Ovary (tissue), 10 donors: ENCODE measurements at regions of chr17 and their contacts with region 1.

Region 1: DNA sequence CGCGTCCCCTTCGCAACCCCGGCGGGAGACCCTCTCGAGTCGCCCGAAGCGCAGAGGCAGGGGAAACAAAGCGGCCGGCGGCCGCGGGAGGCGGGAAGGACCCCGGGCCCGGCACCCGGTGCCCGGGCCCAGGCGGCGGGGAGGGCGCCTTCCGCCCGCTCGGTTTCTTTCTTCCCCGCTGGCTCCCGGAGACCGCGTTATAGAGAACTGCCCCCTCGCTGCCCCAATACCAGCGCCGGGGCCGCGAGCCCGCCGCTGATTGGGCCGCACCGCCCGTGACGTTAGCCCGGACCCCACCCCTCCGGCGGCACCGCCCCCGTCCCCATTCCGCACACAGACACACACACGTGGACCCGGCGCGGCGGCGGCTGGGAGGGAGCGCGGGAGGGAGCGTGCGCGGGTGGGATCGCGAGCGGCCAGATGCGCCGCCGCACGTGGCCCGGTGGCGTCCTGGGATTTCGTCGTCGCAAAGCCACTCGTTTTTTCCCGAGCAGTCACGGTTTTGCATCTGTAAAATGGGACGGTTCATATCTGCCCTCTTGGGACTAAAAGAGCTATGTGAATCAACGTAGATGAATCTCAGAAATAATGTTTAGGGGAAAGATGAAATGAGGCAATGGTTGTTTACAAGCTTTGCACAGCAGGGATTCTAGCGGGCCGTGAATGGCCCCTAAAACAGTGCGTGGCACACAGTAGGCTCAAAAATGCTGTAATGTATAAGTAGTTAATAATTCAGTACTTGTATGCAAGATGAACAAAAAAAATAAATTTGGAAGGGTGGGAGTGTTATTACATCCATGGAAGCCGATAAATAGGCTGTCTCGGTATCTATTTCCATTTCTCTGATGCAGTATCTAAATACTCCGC is at the start of gene EPOP:
- DNase-seq: peak; percentile 64 to 84 (median 75)
- H3K4me3 ChIP-seq: peak within 1 kb of the TSS; percentile 25
- H3K27ac ChIP-seq: no peak within 1 kb of the TSS
- H3K4me1 ChIP-seq: no peaks in the 10 kb centered on the region
- H3K27me3 ChIP-seq: no peaks in the 10 kb centered on the region
- CTCF ChIP-seq: no peak
- EP300 ChIP-seq: no peak
- POLR2A ChIP-seq: no peak
- total RNA-seq, gene EPOP: 0.83 to 1.7 (median 0.86) TPM

Region 2: DNA sequence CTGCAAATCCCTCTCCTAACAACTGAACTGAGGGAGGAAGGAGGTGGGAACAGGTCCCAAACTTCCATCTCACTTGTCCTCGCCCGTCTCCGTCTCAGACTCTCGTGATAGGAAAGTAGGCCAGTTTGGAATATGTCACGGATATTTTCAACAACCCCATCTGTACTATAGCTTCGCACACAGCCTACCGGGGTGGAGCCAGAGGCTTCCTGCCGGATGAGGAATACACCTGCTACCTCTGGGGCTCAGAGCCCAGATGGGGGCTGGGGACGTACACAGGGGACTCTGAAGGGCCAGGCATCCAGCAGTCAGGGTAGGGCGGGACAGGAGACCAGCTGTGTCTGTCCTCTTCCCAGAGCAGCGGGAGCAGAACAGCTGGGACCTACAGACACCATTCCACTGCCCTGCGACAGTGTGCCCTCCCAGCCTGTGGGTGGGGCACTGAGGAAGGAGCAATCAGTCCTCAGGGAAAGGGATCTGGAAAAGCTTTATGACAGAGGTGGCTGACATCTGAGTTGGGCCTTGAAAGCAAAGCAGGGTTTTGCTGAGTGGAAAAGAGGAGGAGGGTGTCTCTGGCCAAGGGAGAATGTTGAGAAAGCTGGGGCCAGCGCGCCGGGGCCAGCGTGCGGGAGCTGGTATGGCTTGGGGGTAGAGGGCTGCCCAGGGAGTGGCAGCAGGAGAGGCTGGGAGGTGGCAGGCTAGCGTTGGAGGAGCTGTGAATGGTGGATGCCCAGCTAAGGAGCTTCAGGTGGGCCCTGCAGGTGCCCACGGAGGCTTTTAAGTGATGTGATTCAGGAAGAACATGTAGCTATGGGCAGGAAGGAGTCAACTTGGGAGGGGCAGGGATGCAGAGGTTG is 57.7 kb before region 1 on chr17:
- intact Hi-C with region 1: no loop called
- DNase-seq: no peak
- H3K4me3 ChIP-seq: no peak overlapping the region
- H3K27ac ChIP-seq: no peak overlapping the region
- H3K4me1 ChIP-seq: no peaks in the 10 kb centered on the region
- H3K27me3 ChIP-seq: no peaks in the 10 kb centered on the region
- CTCF ChIP-seq: no peak
- EP300 ChIP-seq: no peak
- POLR2A ChIP-seq: no peak

Region 3: GRCh38 chr17:38735161-38735997 is 60.4 kb after region 1 on chr17:
- intact Hi-C with region 1: loop called (anchors 5 kb)
- DNase-seq: peak in 4 of 5 donors; percentile 76 to 81 (median 78)
- H3K4me3 ChIP-seq: no peak overlapping the region
- H3K27ac ChIP-seq: no peak overlapping the region
- H3K4me1 ChIP-seq: peaks cover 6% of the 10 kb centered on the region
- H3K27me3 ChIP-seq: no peaks in the 10 kb centered on the region
- CTCF ChIP-seq: peak; percentile 67 to 91 (median 90)
- EP300 ChIP-seq: no peak
- POLR2A ChIP-seq: no peak

Region 4: GRCh38 chr17:38761612-38762011 is 86.6 kb after region 1 on chr17:
- intact Hi-C with region 1: no loop called
- DNase-seq: no peak
- H3K4me3 ChIP-seq: no peak overlapping the region
- H3K27ac ChIP-seq: no peak overlapping the region
- H3K4me1 ChIP-seq: no peaks in the 10 kb centered on the region
- H3K27me3 ChIP-seq: no peaks in the 10 kb centered on the region
- CTCF ChIP-seq: no peak
- EP300 ChIP-seq: no peak
- POLR2A ChIP-seq: no peak